Esophagus muscularis mucosa (tissue), 4 donors: ENCODE measurements at regions of chr3 and their contacts with region 1.

Region 1: DNA sequence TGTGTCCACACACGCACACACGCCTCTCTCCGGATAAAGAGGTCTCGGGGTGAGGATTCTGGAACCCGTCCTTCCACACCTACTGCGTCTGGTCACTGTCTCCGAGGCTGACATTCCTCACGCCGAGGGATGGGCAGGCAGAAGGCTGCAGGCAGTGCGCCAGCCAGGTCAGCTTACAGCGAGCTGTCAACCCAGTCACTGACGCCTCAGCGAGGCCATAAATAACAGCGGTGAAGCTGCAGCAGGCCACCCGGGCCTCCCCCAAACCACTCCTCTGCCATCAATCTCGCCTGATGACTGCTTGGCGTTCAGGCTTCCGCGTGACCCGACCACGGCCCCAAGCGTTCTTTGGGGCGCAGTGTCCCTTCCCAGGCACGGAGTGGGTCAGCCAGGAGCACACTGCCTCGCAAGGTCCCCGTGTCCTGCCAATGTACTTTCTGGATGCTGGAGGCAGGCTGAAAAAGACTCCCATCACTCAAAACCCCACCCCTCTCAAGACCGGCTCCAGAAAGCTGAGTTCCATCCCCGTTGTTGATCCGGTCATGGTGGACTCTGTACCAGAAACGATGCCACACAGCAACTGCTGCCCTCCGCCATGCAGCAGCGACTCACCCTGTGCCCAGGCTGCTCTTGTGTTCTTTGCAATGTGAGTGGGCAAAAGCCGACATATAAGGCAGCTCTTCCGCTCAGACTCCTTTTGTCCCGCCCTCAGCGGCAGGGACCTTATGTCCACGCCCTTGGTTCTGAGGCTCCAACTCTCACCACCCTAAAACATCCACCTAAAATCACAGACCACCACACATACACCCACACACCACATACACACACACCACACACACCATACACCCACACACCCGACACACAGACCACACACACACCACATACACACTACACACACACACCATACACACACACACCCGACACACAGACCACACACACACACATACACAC is 27.1 kb downstream of the CPN2 start:
- DNase-seq: peak; percentile 93
- H3K4me3 ChIP-seq: peak overlapping the region; percentile 40 to 56 (median 44)
- H3K27ac ChIP-seq: peak overlapping the region; percentile 79 to 88 (median 80)
- H3K4me1 ChIP-seq: peaks cover 6 to 44% (median 32%) of the 10 kb centered on the region in 4 donors
- H3K27me3 ChIP-seq: no peaks in the 10 kb centered on the region
- CTCF ChIP-seq: no peak
- EP300 ChIP-seq: peak; percentile 72
- POLR2A ChIP-seq: no peak

Region 2: DNA sequence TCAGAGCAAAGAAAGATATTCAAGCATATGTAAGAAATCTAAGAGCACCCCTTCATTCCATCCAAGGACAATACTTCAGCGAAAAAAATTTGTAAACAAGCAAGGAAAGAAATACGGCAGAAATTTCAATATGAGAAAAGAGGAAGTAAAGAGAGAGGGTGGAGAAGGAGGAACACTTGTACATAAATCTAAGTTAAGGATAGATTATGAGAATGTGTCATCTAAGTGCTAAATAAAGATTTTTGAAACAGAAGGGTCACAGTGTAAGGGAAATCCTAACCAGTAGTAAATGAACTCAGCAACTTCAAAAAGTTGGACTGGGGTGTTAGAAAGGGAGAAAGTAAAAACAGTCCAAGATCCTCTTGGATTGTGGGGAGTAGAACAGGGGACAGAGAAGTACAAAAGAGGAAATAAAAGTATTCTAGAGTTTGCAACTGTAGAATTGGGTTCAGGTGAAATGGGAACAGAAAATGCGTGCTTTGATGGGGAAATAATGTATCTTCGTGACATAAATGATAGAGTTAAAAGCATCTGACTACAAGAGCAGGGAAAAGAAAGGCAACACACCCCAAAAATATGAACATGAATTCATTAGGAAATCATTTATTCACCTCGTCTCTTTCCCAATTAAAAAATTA is 877.0 kb before region 1 on chr3:
- intact Hi-C with region 1: no loop called
- DNase-seq: no peak
- H3K4me3 ChIP-seq: no peak overlapping the region
- H3K27ac ChIP-seq: no peak overlapping the region
- H3K4me1 ChIP-seq: no peaks in the 10 kb centered on the region
- H3K27me3 ChIP-seq: no peaks in the 10 kb centered on the region
- CTCF ChIP-seq: no peak
- EP300 ChIP-seq: no peak
- POLR2A ChIP-seq: no peak

Region 3: DNA sequence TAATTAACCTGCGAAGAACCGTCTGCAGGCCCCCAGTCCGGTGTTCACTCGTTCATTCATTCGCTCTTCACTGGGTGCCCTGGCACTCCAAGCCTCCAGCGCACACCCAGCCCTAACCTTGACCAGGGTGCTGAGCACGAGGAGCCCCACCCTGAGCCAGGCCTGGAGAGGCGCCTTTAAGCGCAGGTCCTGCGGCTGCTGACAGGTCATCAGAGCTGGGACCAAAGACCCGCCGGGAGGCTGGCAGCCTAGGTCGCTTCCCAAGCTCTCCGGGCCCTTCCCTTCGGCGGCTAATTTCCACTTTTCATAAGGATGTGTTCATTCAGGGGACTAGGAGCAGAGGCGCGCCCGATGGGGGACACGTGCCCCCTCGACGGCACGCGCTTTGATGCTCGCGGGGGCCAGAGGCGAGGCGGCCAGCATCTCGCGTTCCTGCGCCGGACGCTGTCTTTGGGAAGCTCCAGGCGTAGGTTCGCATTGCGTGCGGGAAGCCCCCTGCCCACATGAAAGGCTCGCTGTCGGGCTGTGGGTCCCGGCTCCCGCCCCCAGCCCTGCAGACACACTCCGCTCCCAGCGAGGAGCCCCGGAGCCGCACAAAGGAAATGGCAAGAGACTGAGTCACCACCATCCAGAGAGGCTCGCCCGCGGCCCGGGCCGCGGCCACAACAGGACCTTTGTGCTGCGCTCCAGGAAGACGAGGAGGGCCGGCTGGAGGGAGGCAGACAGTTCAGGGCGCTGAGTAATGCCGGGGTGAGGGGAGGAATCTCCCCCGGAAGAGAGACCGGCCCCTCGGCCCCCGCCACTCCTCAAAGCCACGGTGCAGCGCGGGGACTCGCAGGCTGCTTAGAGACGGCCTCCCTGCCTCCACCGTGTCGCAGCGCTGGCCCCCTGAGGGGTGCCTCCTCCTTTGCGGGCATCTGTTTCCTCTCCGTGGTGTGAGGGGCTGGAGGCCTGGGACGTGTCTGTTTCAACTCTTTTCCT is 454.5 kb before region 1 on chr3:
- intact Hi-C with region 1: loop called (anchors 5 kb)
- DNase-seq: no peak
- H3K4me3 ChIP-seq: peak overlapping the region; percentile 5 to 24 (median 15)
- H3K27ac ChIP-seq: peak overlapping the region in 3 of 4 donors; percentile 13 to 51 (median 26)
- H3K4me1 ChIP-seq: peaks cover 22 to 57% (median 41%) of the 10 kb centered on the region in 4 donors
- H3K27me3 ChIP-seq: peaks cover 0 to 15% (median 3%) of the 10 kb centered on the region in 4 donors
- CTCF ChIP-seq: no peak
- EP300 ChIP-seq: no peak
- POLR2A ChIP-seq: no peak